ENCODE measurements at regions of chr1 and their contacts with region 1.

Region 1: DNA sequence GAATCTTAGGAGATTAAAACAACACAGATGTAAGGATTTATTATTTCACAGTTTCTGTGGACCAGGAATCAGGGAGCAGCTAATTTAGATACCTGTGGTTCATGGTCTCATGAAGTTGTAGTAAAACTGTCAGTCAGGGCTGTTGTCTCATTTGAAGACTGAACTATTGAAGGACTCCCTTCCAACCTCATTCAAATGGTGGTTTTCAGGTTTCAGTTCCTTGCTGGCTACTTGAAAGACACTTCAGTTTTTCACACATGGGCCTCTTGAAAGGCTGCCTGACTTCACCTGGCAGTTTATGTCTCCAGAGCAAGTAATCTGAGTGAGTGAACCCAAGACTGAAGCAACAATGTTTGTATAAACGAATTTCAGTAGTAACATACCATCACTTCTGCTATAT is 915.9 kb downstream of the PLA2G4A start:
- DNase-seq: no peak
- H3K4me3 ChIP-seq: no peak overlapping the region
- H3K27ac ChIP-seq: no peak overlapping the region
- H3K4me1 ChIP-seq: no peaks in the 10 kb centered on the region
- H3K27me3 ChIP-seq: no peaks in the 10 kb centered on the region
- CTCF ChIP-seq: no peak
- POLR2A ChIP-seq: no peak

Region 2: DNA sequence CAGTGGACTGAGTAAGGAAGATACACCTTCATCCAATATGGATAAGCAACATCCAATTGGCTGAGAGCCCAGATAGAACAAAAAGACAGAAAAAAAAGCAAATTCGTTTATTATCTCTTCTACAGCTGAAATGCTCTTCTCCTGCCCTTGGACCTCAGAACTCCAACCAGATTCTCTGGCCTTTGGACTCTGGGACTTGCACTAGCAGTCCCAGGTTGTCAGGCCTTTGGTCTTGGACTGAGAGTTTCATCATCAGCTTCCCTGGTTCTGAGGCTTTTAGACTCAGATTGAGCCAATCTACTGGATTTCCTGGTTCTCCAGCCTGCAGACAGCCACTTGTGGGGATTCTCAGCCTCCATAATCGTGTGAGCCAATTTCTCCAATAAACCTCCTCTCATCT is 10.9 kb after region 1 on chr1:
- CTCF ChIA-PET with region 1: interaction called, 3 read pairs
- POLR2A ChIA-PET with region 1: no interaction called
- dilution Hi-C with region 1: no loop called
- intact Hi-C with region 1: loop called (anchors 1 kb)
- DNase-seq: no peak
- H3K4me3 ChIP-seq: no peak overlapping the region
- H3K27ac ChIP-seq: no peak overlapping the region
- H3K4me1 ChIP-seq: no peaks in the 10 kb centered on the region
- H3K27me3 ChIP-seq: no peaks in the 10 kb centered on the region
- CTCF ChIP-seq: no peak
- POLR2A ChIP-seq: no peak